Activated T-helper 1 cell treated with anti-CD3 and anti-CD28 coated beads, Interleukin-12 subunit alpha, Interleukin-12 subunit beta, Interleukin-2, Interleukin-4 antibody, amounts not matched to agents 30 ng/mL and 10 ng/mL and 1 ng/mL, durations not matched to agents 14 hours and 24 hours and 36 hours (primary cell): ENCODE measurements at regions of chr4 and their contacts with region 1.

Region 1: DNA sequence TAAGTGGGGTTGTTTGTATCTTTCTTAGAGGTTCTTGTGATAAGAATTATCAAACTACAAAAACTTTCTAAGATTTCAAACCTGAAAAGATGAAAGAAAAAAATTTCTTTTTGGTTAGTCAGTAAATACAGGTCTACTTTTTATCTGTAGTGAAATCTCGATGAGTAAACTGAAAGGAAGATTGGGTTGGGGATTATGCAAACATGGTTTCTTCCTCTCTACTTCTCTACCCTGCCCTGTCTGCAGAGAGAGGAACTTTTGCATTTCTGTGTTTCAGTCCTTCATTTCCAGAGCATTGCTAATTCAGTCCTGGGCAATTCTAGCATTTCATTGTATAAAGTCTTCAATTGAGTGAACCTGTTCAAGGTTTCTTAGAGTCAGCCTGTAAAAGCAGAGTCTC is 51.6 kb upstream of the IL2 start:
- DNase-seq: no peak
- H3K4me3 Mint-ChIP-seq: peak overlapping the region; percentile 71
- H3K27ac Mint-ChIP-seq: peak overlapping the region; percentile 89
- H3K4me1 Mint-ChIP-seq: peaks cover 69% of the 10 kb centered on the region
- H3K27me3 Mint-ChIP-seq: no peaks in the 10 kb centered on the region

Region 2: GRCh38 chr4:121711263-121712000 is 796.7 kb before region 1 on chr4:
- intact Hi-C with region 1: loop called (anchors 1 kb)
- DNase-seq: peak; percentile 10
- H3K4me3 Mint-ChIP-seq: peak overlapping the region; percentile 45
- H3K27ac Mint-ChIP-seq: no peak overlapping the region
- H3K4me1 Mint-ChIP-seq: peaks cover 51% of the 10 kb centered on the region
- H3K27me3 Mint-ChIP-seq: peaks cover 24% of the 10 kb centered on the region

Region 3: DNA sequence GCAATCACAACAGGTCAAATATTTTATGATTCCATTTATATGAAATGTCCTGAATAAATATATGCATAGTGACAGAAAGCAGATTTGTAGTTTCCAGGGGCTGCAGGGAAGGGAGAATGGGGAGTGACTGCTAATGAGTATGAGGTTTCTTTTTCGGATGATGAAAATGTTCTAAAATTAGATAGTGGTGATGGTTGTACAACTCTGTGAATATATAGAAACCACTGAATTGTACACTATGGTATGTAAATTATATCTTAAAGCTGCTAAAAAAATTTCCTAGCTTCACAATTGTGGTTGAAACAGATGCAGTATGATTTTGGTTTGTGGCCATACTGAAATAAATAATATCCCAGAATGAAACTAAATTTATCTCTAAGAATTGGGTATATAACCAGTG is 38.6 kb before region 1 on chr4:
- intact Hi-C with region 1: loop called (anchors 2 kb)
- DNase-seq: no peak
- H3K4me3 Mint-ChIP-seq: no peak overlapping the region
- H3K27ac Mint-ChIP-seq: no peak overlapping the region
- H3K4me1 Mint-ChIP-seq: no peaks in the 10 kb centered on the region
- H3K27me3 Mint-ChIP-seq: no peaks in the 10 kb centered on the region

Region 4: DNA sequence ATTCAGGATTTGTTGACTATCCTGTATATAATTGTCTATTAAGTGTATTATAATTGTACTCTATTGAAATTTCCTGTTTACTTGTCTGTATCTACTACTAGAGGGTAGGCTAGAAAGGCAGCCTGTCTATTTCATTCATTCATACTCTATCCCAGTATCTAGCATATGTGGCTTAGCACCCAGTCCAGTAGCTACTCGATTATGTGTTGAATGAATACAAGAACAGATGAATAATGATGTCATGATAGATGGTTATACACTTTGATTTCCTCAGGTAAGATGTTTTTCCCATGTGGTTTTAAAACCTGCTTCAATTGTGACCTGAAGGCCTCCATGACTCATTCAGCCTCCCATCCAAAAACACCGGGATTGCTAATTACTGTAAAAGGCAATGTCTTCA is 44.8 kb after region 1 on chr4:
- intact Hi-C with region 1: loop called (anchors 1 kb)
- DNase-seq: no peak
- H3K4me3 Mint-ChIP-seq: no peak overlapping the region
- H3K27ac Mint-ChIP-seq: peak overlapping the region; percentile 28
- H3K4me1 Mint-ChIP-seq: peaks cover 79% of the 10 kb centered on the region
- H3K27me3 Mint-ChIP-seq: no peaks in the 10 kb centered on the region

Region 5: DNA sequence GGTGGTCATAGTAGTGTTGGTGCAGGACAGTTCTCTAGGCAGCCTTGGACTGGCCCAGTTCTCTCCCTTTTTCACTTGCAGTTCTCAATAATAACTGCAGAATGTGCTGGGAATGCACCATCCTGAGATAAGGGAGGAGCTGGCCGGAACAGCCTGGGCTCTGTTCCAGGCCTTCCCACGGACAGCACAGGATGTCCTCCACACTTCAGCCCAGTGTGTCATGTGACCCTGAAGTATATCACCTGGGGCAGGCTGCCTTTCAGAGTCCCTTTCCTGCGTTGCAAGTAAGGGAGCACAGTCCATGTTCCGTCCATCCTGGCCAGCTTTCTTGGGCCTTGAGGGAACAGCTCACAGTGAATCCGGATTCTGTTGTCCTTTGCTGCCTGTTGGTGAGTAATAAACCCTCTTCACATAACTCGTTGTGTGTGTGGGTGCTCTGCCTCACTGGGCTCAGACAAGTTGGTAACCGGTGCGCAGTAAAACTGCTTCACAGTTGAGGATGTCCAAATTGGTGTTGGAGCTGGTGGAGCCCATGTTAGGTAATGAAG is 192.2 kb after region 1 on chr4:
- intact Hi-C with region 1: loop called (anchors 1 kb)
- DNase-seq: no peak
- H3K4me3 Mint-ChIP-seq: peak overlapping the region; percentile 81
- H3K27ac Mint-ChIP-seq: peak overlapping the region; percentile 95
- H3K4me1 Mint-ChIP-seq: peaks cover 70% of the 10 kb centered on the region
- H3K27me3 Mint-ChIP-seq: peaks cover 2% of the 10 kb centered on the region

Region 6: GRCh38 chr4:122783301-122784215 is 275.5 kb after region 1 on chr4:
- intact Hi-C with region 1: no loop called
- DNase-seq: no peak
- H3K4me3 Mint-ChIP-seq: peak overlapping the region; percentile 13
- H3K27ac Mint-ChIP-seq: no peak overlapping the region
- H3K4me1 Mint-ChIP-seq: peaks cover 40% of the 10 kb centered on the region
- H3K27me3 Mint-ChIP-seq: peaks cover 11% of the 10 kb centered on the region

Region 7: DNA sequence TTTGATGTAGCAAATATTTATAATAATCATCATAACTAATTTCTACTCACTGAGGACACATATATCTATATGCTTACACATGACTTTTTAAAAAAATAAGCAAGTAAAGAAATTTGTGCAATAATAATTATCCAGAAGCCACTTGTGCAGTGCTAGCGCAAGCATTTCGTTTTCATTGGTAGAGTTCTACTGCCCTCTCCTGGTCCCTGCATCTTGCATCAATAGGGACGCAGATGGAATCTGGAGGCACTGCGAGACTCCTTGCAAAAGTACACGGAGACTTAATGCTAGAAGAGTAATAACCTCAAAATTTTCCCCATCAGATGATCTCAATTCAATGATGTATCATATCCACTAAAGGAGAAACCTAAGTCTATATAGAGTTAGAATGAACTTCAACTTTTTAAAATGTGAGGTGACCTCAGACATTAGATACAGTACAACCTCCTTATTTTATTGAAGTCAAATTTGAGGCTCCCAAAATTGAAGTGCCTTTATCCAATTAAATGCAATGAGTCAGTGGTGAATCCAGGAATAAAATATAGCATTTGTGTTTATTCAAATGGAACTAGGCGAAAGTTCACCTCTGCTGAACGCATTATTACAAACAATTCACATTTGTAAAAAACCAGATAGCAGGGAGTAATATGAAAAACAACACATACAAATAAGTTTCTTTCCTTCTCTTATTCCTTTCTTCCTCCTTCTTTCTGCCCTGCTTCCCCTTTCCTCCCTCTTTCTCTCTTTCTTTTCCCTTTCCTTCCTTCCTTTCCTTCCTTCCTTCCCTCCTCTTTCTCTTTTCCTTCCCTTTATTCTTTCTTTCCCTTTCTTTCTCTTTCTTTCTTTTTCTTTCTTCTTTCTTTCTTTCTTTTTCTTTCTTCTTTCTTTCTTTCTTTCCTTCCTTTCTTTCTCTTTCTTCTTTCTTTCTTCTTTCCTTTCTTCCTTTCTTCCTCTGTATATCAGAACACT is 1754.4 kb after region 1 on chr4:
- intact Hi-C with region 1: no loop called
- DNase-seq: peak; percentile 2
- H3K4me3 Mint-ChIP-seq: no peak overlapping the region
- H3K27ac Mint-ChIP-seq: no peak overlapping the region
- H3K4me1 Mint-ChIP-seq: no peaks in the 10 kb centered on the region
- H3K27me3 Mint-ChIP-seq: peaks cover 2% of the 10 kb centered on the region